Transverse colon (tissue), 4 donors: ENCODE measurements at regions of chr21 and their contacts with region 1.

Region 1: DNA sequence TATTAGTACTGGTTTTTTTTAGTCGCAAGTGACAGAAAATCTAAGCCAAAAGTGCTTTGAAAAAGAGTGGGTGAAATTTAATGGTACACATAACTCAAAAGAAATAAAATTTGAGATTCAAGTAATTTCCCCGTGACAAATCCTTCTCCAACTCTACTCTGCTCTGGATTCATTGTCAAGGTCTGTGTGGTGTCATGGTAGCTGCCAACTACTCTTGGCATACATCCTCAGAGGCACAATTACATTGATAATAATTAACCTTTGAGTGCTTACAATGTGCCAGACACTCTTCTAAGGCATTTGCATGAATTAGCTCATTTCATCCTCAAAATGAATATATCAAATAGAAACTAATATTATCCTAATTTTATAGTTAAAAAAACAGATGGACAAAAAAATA is 1153.9 kb upstream of the NCAM2 start:
- DNase-seq: no peak
- H3K4me3 ChIP-seq: no peak overlapping the region
- H3K27ac ChIP-seq: no peak overlapping the region
- H3K4me1 ChIP-seq: no peaks in the 10 kb centered on the region
- H3K27me3 ChIP-seq: no peaks in the 10 kb centered on the region
- CTCF ChIP-seq: no peak
- EP300 ChIP-seq: no peak
- POLR2A ChIP-seq: no peak

Region 2: GRCh38 chr21:19648376-19648775 is 196.0 kb before region 1 on chr21:
- in situ Hi-C with region 1: no loop called
- intact Hi-C with region 1: no loop called
- DNase-seq: no peak
- H3K4me3 ChIP-seq: no peak overlapping the region
- H3K27ac ChIP-seq: no peak overlapping the region
- H3K4me1 ChIP-seq: no peaks in the 10 kb centered on the region
- H3K27me3 ChIP-seq: no peaks in the 10 kb centered on the region
- CTCF ChIP-seq: no peak
- EP300 ChIP-seq: no peak
- POLR2A ChIP-seq: no peak

Region 3: GRCh38 chr21:19899645-19900044 is 55.3 kb after region 1 on chr21:
- in situ Hi-C with region 1: no loop called
- intact Hi-C with region 1: loop called (anchors 10 kb)
- DNase-seq: no peak
- H3K4me3 ChIP-seq: no peak overlapping the region
- H3K27ac ChIP-seq: no peak overlapping the region
- H3K4me1 ChIP-seq: no peaks in the 10 kb centered on the region
- H3K27me3 ChIP-seq: no peaks in the 10 kb centered on the region
- CTCF ChIP-seq: no peak
- EP300 ChIP-seq: no peak
- POLR2A ChIP-seq: no peak